ENCODE measurements at regions of chr9 and their contacts with region 1.

Region 1: GRCh38 chr9:5510360-5510931 is at the start of gene PDCD1LG2:
- DNase-seq: peak; percentile 69
- H3K4me3 ChIP-seq: peak within 1 kb of the TSS; percentile 2 to 49 (median 7)
- H3K27ac ChIP-seq: peak within 1 kb of the TSS; percentile 95
- H3K4me1 ChIP-seq: peaks cover 47% of the 10 kb centered on the region
- H3K27me3 ChIP-seq: no peaks in the 10 kb centered on the region
- CTCF ChIP-seq: no peak
- POLR2A ChIP-seq: peak; percentile 79
- total RNA-seq, gene PDCD1LG2: 9.5 and 9.7 TPM in 2 replicates

Region 2: DNA sequence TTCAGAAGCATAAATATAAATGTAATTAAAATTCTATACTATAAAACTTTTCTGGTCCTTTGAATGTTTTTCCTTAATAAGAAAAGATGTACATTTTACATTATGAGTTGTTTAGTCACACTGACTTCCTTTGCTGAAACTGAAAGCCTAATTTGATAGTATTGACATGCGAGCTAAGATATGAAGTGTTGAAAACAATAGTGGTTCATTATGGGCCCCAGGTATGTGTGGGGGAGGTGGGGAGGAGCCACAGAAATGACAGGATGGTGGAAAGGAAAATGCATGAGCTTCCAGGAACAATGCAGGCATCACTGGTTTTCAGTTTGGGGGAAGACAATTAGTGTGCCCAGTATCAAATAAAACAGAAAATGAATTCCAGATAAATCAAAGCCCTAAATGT is 135.4 kb before region 1 on chr9:
- CTCF ChIA-PET with region 1: no interaction called
- POLR2A ChIA-PET with region 1: no interaction called
- dilution Hi-C with region 1: no loop called
- intact Hi-C with region 1: loop called (anchors 5 kb)
- DNase-seq: peak; percentile 6
- H3K4me3 ChIP-seq: no peak overlapping the region
- H3K27ac ChIP-seq: peak overlapping the region; percentile 87
- H3K4me1 ChIP-seq: peaks cover 20% of the 10 kb centered on the region
- H3K27me3 ChIP-seq: no peaks in the 10 kb centered on the region
- CTCF ChIP-seq: no peak
- POLR2A ChIP-seq: no peak

Region 3: DNA sequence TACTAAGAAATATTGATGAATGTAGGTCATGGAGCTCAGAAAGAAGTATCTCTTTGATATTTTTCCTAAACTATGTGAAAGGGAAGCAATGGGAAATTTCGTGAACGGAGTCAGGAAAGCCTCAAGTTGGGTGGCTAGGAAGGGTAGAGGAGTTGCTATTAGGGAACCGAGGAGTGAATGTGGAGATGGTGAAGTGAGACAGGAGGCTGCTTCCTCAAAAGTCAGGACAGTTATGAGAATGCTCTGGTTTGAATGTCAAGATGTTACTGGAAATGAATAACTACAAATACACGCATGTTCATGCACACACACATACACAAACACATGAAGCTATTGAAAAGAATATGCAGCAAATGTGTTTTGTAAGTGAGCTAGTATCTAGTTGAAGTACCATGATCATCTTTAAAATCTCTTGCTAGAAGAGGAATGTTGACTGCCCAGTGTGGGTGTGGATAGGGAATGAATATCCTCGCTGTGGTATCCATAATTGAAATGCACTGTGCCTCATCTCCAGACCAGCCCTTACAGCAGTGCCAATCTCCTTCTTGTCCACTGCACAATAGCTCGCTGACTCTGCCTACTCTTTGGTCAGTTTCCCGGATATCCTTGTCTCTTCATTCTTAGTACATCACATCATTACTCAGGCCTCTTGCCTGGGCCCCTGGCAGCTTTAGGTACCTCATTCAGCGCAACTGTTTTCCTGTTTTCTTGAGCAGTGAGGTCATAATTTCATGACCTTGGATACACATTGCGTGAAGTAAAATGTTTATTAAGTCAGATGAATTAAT is 22.0 kb before region 1 on chr9:
- CTCF ChIA-PET with region 1: interaction called, 7 read pairs
- POLR2A ChIA-PET with region 1: interaction called, 15 read pairs
- dilution Hi-C with region 1: no loop called
- intact Hi-C with region 1: loop called (anchors 1 kb)
- DNase-seq: peak; percentile 88
- H3K4me3 ChIP-seq: no peak overlapping the region
- H3K27ac ChIP-seq: peak overlapping the region; percentile 74
- H3K4me1 ChIP-seq: peaks cover 33% of the 10 kb centered on the region
- H3K27me3 ChIP-seq: no peaks in the 10 kb centered on the region
- CTCF ChIP-seq: no peak
- POLR2A ChIP-seq: peak; percentile 69

Region 4: GRCh38 chr9:5549658-5550310 is 39.3 kb after region 1 on chr9:
- CTCF ChIA-PET with region 1: no interaction called
- POLR2A ChIA-PET with region 1: interaction called, 10 read pairs
- dilution Hi-C with region 1: no loop called
- intact Hi-C with region 1: loop called (anchors 1 kb)
- DNase-seq: peak; percentile 76
- H3K4me3 ChIP-seq: no peak overlapping the region
- H3K27ac ChIP-seq: peak overlapping the region; percentile 42
- H3K4me1 ChIP-seq: peaks cover 39% of the 10 kb centered on the region
- H3K27me3 ChIP-seq: no peaks in the 10 kb centered on the region
- CTCF ChIP-seq: no peak
- POLR2A ChIP-seq: no peak